CD8-positive, alpha-beta memory T cell (primary cell): ENCODE measurements at regions of chr12 and their contacts with region 1.

Region 1: GRCh38 chr12:49644620-49644994 is 21.2 kb downstream of the PRPF40B start:
- DNase-seq: peak; percentile 76 to 89 (median 77)
- H3K4me3 ChIP-seq: no peak overlapping the region
- H3K4me3 Mint-ChIP-seq: peak overlapping the region in 2 of 7 donors; percentile 20 to 23
- H3K27ac ChIP-seq: no peak overlapping the region
- H3K27ac Mint-ChIP-seq: peak overlapping the region; percentile 44 to 98 (median 89)
- H3K4me1 ChIP-seq: peaks cover 17% of the 10 kb centered on the region
- H3K4me1 Mint-ChIP-seq: peaks cover 18 to 31% (median 23%) of the 10 kb centered on the region in 3 donors
- H3K27me3 ChIP-seq: no peaks in the 10 kb centered on the region
- H3K27me3 Mint-ChIP-seq: no peaks in the 10 kb centered on the region

Region 2: DNA sequence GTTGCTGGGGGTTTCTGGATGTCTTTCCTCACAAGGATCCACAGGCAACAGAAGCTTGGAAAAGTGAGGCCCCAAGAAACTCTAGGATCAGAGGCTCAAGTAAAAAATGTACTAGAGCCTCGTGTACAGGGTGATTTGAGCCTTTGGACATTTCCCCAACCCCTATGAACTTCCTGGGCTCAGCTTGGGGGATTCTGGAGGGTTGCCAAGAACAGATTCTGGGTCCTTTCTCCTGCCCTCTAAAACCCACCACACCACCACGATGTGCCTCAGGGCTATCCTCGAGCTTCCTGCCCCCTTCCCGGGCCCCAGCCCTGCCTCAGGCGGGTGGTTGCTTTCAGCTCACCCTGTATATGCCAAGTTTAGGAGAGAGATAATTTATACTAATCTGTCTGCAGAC is 39.8 kb before region 1 on chr12:
- CTCF ChIA-PET with region 1: no interaction called
- POLR2A ChIA-PET with region 1: no interaction called
- DNase-seq: no peak
- H3K4me3 ChIP-seq: no peak overlapping the region
- H3K4me3 Mint-ChIP-seq: no peak overlapping the region
- H3K27ac ChIP-seq: no peak overlapping the region
- H3K27ac Mint-ChIP-seq: no peak overlapping the region
- H3K4me1 ChIP-seq: no peaks in the 10 kb centered on the region
- H3K4me1 Mint-ChIP-seq: no peaks in the 10 kb centered on the region
- H3K27me3 ChIP-seq: no peaks in the 10 kb centered on the region
- H3K27me3 Mint-ChIP-seq: peaks cover 0 to 15% of the 10 kb centered on the region in 2 donors

Region 3: GRCh38 chr12:49662998-49663843 is 18.6 kb after region 1 on chr12:
- CTCF ChIA-PET with region 1: interaction called, 21 read pairs
- POLR2A ChIA-PET with region 1: interaction called, 5 read pairs
- DNase-seq: peak; percentile 67 to 88 (median 77)
- H3K4me3 ChIP-seq: peak overlapping the region; percentile 46
- H3K4me3 Mint-ChIP-seq: peak overlapping the region; percentile 18 to 92 (median 81)
- H3K27ac ChIP-seq: peak overlapping the region; percentile 62
- H3K27ac Mint-ChIP-seq: peak overlapping the region; percentile 96 to 100 (median 98)
- H3K4me1 ChIP-seq: peaks cover 62% of the 10 kb centered on the region
- H3K4me1 Mint-ChIP-seq: peaks cover 60 to 83% (median 73%) of the 10 kb centered on the region in 3 donors
- H3K27me3 ChIP-seq: no peaks in the 10 kb centered on the region
- H3K27me3 Mint-ChIP-seq: no peaks in the 10 kb centered on the region

Region 4: DNA sequence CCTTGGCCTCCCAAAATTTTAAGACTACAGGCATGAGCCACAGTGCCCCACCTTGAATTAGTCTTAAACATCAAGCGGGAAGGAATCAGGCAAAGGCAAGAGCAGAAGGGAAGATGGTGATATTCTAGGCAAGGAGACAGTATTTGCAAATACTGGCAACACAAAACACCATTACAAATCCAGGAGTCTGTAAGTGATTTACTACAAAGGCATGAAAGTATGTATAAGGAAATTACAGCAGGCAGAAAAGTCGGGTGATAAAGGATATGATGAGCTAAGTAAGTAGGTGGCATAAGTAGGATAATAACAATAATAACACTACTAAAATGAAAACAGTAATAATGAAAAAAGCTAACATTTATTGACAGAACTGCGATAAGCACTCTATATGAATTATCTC is 34.1 kb after region 1 on chr12:
- CTCF ChIA-PET with region 1: interaction called, 11 read pairs
- POLR2A ChIA-PET with region 1: interaction called, 5 read pairs
- DNase-seq: no peak
- H3K4me3 ChIP-seq: no peak overlapping the region
- H3K4me3 Mint-ChIP-seq: no peak overlapping the region
- H3K27ac ChIP-seq: no peak overlapping the region
- H3K27ac Mint-ChIP-seq: peak overlapping the region in 2 of 8 donors; percentile 23 to 61
- H3K4me1 ChIP-seq: peaks cover 37% of the 10 kb centered on the region
- H3K4me1 Mint-ChIP-seq: peaks cover 40 to 64% (median 55%) of the 10 kb centered on the region in 3 donors
- H3K27me3 ChIP-seq: no peaks in the 10 kb centered on the region
- H3K27me3 Mint-ChIP-seq: no peaks in the 10 kb centered on the region

Region 5: GRCh38 chr12:49716553-49716952 is 71.9 kb after region 1 on chr12:
- CTCF ChIA-PET with region 1: interaction called, 248 read pairs
- POLR2A ChIA-PET with region 1: no interaction called
- DNase-seq: no peak
- H3K4me3 ChIP-seq: no peak overlapping the region
- H3K4me3 Mint-ChIP-seq: no peak overlapping the region
- H3K27ac ChIP-seq: no peak overlapping the region
- H3K27ac Mint-ChIP-seq: no peak overlapping the region
- H3K4me1 ChIP-seq: no peaks in the 10 kb centered on the region
- H3K4me1 Mint-ChIP-seq: no peaks in the 10 kb centered on the region
- H3K27me3 ChIP-seq: no peaks in the 10 kb centered on the region
- H3K27me3 Mint-ChIP-seq: peaks cover 5 to 24% of the 10 kb centered on the region in 2 donors